ENCODE measurements at regions of chr4 and their contacts with region 1.

Region 1: GRCh38 chr4:70839589-70840093 is at the start of gene GRSF1:
- DNase-seq: peak; percentile 93 to 97 (median 94)
- ATAC-seq: peak; percentile 82 to 86
- H3K4me3 Mint-ChIP-seq: peak within 1 kb of the TSS; percentile 94 to 99 (median 97)
- H3K27ac Mint-ChIP-seq: peak within 1 kb of the TSS; percentile 91 to 98 (median 97)
- H3K4me1 Mint-ChIP-seq: peaks cover 8 to 48% (median 28%) of the 10 kb centered on the region in 4 donors
- H3K27me3 Mint-ChIP-seq: no peaks in the 10 kb centered on the region
- polyA plus RNA-seq, gene GRSF1: 71.8 to 96.6 (median 84.4) TPM

Region 2: GRCh38 chr4:70687821-70688794 is 151.5 kb before region 1 on chr4 and contains the start of gene UTP3:
- POLR2A ChIA-PET with region 1: interaction called, 18 read pairs
- DNase-seq: peak; percentile 87 to 95 (median 91)
- ATAC-seq: peak; percentile 87 to 91
- H3K4me3 Mint-ChIP-seq: peak within 1 kb of the TSS; percentile 95 to 100 (median 98)
- H3K27ac Mint-ChIP-seq: peak within 1 kb of the TSS; percentile 98 to 100 (median 99)
- H3K4me1 Mint-ChIP-seq: peaks cover 19 to 52% (median 40%) of the 10 kb centered on the region in 4 donors
- H3K27me3 Mint-ChIP-seq: no peaks in the 10 kb centered on the region
- polyA plus RNA-seq, gene UTP3: 9.7 to 20.3 (median 13.9) TPM

Region 3: DNA sequence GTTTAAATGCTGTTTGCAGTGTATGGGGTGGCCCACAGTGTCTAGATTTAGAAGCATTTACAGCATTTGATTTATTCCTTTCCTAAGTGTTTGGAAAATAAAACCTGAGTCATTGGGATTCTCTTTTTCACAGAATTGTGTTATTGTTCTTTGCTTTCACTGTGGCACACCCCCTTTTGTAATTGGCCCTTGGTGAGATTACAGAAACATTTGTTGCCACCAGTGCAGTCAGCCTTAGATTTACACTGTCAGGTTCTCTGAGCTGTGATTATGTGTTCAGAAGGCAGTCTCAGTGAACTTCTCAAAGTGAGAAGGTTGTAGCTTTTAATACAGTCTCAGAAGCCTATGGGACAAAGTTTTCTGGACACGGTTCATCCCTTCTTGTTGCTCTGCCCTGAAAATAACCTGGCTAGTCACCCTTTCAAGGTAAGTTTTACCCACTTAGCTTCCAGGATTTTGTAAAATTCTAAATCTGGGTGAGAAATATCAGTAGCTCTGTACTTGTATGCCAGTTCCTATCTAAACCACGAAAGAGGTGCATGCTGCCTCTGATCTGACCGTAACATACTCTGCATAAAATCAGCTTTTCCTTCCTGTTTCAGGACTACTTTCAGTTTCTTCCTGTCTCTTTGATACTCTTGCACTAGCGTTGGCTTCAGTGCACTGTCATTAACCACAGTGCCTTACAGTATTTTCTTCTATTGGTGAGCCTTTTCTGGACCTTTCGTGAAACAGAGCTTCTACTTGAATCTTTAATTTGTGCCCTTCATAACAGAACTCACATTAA is 105.3 kb before region 1 on chr4:
- POLR2A ChIA-PET with region 1: interaction called, 54 read pairs
- DNase-seq: peak in 9 of 10 donors; percentile 12 to 77 (median 45)
- ATAC-seq: peak; percentile 88 to 90
- H3K4me3 Mint-ChIP-seq: peak overlapping the region; percentile 66 to 81 (median 74)
- H3K27ac Mint-ChIP-seq: peak overlapping the region; percentile 51 to 93 (median 88)
- H3K4me1 Mint-ChIP-seq: peaks cover 15 to 53% (median 53%) of the 10 kb centered on the region in 4 donors
- H3K27me3 Mint-ChIP-seq: no peaks in the 10 kb centered on the region

Region 4: DNA sequence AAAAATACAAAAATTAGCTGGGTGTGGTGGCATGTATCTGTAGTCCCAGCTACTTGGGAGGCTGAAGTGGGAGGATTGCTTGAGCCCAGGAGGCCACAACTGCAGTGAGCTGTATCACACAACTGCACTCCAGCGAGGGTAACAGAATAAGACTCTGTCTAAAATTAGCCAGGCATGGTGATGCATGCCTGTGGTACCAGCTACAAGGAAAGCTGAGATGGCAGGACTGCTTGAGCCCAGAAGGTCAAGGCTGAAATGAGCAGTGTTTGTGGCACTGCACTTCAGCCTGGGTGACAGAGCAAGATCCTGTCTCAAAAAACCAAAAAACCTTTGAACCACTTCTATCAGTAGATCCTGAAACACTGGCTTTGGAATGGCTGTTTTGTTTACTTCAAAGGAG is 10.1 kb before region 1 on chr4:
- POLR2A ChIA-PET with region 1: interaction called, 15 read pairs
- DNase-seq: no peak
- ATAC-seq: no peak
- H3K4me3 Mint-ChIP-seq: no peak overlapping the region
- H3K27ac Mint-ChIP-seq: peak overlapping the region in 1 of 10 donors; percentile 84
- H3K4me1 Mint-ChIP-seq: peaks cover 2 to 16% (median 9%) of the 10 kb centered on the region in 4 donors
- H3K27me3 Mint-ChIP-seq: no peaks in the 10 kb centered on the region

Region 5: GRCh38 chr4:70993181-70994068 is 153.8 kb after region 1 on chr4 and contains the start of gene DCK:
- POLR2A ChIA-PET with region 1: interaction called, 25 read pairs
- DNase-seq: peak; percentile 71 to 86 (median 82)
- ATAC-seq: peak; percentile 82 to 85
- H3K4me3 Mint-ChIP-seq: peak within 1 kb of the TSS; percentile 90 to 98 (median 94)
- H3K27ac Mint-ChIP-seq: peak within 1 kb of the TSS; percentile 89 to 99 (median 94)
- H3K4me1 Mint-ChIP-seq: peaks cover 22 to 48% (median 44%) of the 10 kb centered on the region in 4 donors
- H3K27me3 Mint-ChIP-seq: no peaks in the 10 kb centered on the region
- polyA plus RNA-seq, gene DCK: 83.8 to 100 (median 93.1) TPM

Measured in naive thymus-derived CD8-positive, alpha-beta T cell (primary cell).